OCI-LY7 (cell line): ENCODE measurements at regions of chr1 and their contacts with region 1.

Region 1: GRCh38 chr1:19651141-19651737 is 7.1 kb downstream of the NBL1 start:
- DNase-seq: peak; percentile 48
- H3K4me3 ChIP-seq: no peak overlapping the region
- H3K27ac ChIP-seq: no peak overlapping the region
- H3K4me1 ChIP-seq: peaks cover 4% of the 10 kb centered on the region
- CTCF ChIP-seq: peak; percentile 76

Region 2: GRCh38 chr1:19251305-19252196 is 399.7 kb before region 1 on chr1 and contains the starts of genes EMC1 and MRTO4:
- CTCF ChIA-PET with region 1: no interaction called
- POLR2A ChIA-PET with region 1: no interaction called
- intact Hi-C with region 1: loop called (anchors 10 kb)
- DNase-seq: peak; percentile 88
- H3K4me3 ChIP-seq: peak within 1 kb of the TSS; percentile 99
- H3K27ac ChIP-seq: peak within 1 kb of the TSS; percentile 72
- H3K4me1 ChIP-seq: peaks cover 35% of the 10 kb centered on the region
- CTCF ChIP-seq: no peak
- total RNA-seq, gene EMC1: 35.2 and 41.3 TPM in 2 replicates
- total RNA-seq, gene MRTO4: 60.0 and 67.6 TPM in 2 replicates

Region 3: DNA sequence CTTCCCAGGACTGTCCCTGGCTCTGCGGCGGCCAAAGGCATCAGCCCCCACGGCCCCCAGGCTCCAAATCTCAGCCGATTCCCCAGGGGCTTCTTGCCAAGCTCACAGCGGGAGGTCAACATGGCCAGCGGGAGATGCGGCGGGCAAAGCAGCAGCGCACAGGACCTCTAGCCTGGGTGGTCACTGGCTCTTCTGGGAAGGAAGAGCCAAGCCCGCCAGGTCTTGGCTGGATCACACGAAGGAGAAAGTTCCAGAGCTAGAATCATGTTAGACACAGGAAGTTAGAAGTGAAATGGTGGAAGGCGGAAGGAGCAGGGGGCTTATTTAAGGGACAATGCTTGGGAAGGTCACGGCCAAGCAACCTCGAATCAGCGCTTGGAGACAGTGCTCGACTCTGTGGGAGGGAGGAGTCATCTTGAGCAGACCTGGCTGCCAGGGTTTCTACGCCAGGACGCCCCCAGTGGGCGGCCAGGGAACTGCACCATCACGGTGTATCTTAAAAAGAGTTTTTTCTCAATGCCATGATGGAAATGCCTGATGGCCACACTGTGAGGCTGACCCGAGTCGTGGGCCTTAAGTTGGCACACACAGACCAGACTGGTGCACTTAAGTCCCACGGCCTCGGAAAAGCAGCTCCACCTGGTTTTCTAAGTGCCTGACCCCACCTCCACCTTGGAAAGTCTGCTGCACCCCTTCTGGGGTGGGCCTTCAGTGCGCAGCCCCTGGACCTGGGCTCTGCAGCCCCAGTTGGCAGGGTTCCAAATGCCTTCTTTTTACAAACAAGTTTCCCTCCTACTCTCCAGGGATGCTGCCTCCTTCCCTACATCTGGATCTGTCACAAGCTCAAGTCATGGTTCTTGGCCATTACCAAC is 309.8 kb before region 1 on chr1:
- CTCF ChIA-PET with region 1: no interaction called
- POLR2A ChIA-PET with region 1: no interaction called
- intact Hi-C with region 1: loop called (anchors 1 kb)
- DNase-seq: peak; percentile 75
- H3K4me3 ChIP-seq: no peak overlapping the region
- H3K27ac ChIP-seq: no peak overlapping the region
- H3K4me1 ChIP-seq: no peaks in the 10 kb centered on the region
- CTCF ChIP-seq: peak; percentile 88

Region 4: GRCh38 chr1:19390901-19391595 is 260.2 kb before region 1 on chr1:
- CTCF ChIA-PET with region 1: no interaction called
- POLR2A ChIA-PET with region 1: interaction called, 6 read pairs
- intact Hi-C with region 1: loop called (anchors 1 kb)
- DNase-seq: peak; percentile 74
- H3K4me3 ChIP-seq: peak overlapping the region; percentile 41
- H3K27ac ChIP-seq: peak overlapping the region; percentile 77
- H3K4me1 ChIP-seq: peaks cover 44% of the 10 kb centered on the region
- CTCF ChIP-seq: peak; percentile 99

Region 5: GRCh38 chr1:19704247-19705113 is 53.2 kb after region 1 on chr1:
- CTCF ChIA-PET with region 1: no interaction called
- POLR2A ChIA-PET with region 1: no interaction called
- intact Hi-C with region 1: no loop called
- DNase-seq: peak; percentile 57
- H3K4me3 ChIP-seq: no peak overlapping the region
- H3K27ac ChIP-seq: no peak overlapping the region
- H3K4me1 ChIP-seq: no peaks in the 10 kb centered on the region
- CTCF ChIP-seq: peak; percentile 88

Region 6: DNA sequence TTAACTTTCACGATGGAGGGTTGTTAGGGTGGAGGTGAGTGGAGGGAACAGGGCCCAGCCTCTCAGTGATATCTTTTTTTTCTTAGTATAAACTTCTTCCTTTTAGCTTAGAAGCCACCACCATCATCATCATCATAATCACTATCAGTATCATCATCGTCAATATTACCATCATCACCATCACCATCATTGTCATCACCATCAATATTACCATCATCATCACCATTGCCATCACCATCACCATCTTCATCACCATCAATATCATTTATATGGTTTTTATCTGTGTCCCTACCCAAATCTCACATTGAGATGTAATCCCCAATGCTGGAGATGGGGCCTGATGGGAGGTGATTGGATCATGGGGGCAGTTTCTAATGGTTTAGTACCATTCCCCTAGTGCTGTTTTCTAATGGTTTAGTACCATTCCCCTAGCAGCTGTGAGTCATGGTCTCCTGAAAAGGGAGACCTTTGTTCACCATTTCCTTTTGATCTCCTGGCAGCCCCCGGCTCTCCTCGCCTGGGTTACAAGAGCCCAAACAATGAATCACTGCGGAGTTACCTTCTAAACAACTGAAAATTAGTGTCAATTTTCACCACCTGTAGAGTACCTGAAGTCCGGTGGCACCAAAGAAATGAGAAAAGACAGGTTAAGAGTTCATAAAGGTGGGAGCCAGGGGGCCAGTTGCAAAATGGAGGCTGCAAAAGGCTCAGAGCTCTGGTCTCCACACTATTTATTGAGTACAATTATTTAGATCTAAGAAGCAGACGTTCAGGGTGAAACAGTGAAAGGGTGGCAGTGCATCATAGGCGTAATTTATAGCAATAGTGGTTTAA is 275.3 kb after region 1 on chr1:
- CTCF ChIA-PET with region 1: no interaction called
- POLR2A ChIA-PET with region 1: no interaction called
- intact Hi-C with region 1: no loop called
- DNase-seq: no peak
- H3K4me3 ChIP-seq: no peak overlapping the region
- H3K27ac ChIP-seq: no peak overlapping the region
- H3K4me1 ChIP-seq: no peaks in the 10 kb centered on the region
- CTCF ChIP-seq: no peak